GM23248 (cell line): ENCODE measurements at regions of chr11 and their contacts with region 1.

Region 1: GRCh38 chr11:27705873-27706820 is 5.9 kb upstream of the BDNF start:
- DNase-seq: peak; percentile 56
- H3K4me3 ChIP-seq: no peak overlapping the region
- H3K27ac ChIP-seq: no peak overlapping the region
- H3K4me1 ChIP-seq: 0 out of 2 replicates have a peak, but pooled peaks cover 12% of the 10 kb centered on the region
- H3K27me3 ChIP-seq: no peaks in the 10 kb centered on the region

Region 2: GRCh38 chr11:27656806-27657483 is 49.2 kb before region 1 on chr11:
- in situ Hi-C with region 1: no loop called
- DNase-seq: no peak
- H3K4me3 ChIP-seq: no peak overlapping the region
- H3K27ac ChIP-seq: no peak overlapping the region
- H3K4me1 ChIP-seq: peaks cover 15% of the 10 kb centered on the region; the same call in 1 of the 2 replicates
- H3K27me3 ChIP-seq: no peaks in the 10 kb centered on the region

Region 3: GRCh38 chr11:28107748-28108618 is 401.8 kb after region 1 on chr11 and contains the starts of genes KIF18A and METTL15:
- in situ Hi-C with region 1: loop called (anchors 25 kb)
- DNase-seq: peak; percentile 100
- H3K4me3 ChIP-seq: peak within 1 kb of the TSS; percentile 94
- H3K27ac ChIP-seq: peak within 1 kb of the TSS; percentile 97
- H3K4me1 ChIP-seq: peaks cover 62% of the 10 kb centered on the region
- H3K27me3 ChIP-seq: no peaks in the 10 kb centered on the region
- total RNA-seq, gene KIF18A: 7.8 and 12.5 TPM in 2 replicates
- total RNA-seq, gene METTL15: 11.0 and 15.9 TPM in 2 replicates

Region 4: DNA sequence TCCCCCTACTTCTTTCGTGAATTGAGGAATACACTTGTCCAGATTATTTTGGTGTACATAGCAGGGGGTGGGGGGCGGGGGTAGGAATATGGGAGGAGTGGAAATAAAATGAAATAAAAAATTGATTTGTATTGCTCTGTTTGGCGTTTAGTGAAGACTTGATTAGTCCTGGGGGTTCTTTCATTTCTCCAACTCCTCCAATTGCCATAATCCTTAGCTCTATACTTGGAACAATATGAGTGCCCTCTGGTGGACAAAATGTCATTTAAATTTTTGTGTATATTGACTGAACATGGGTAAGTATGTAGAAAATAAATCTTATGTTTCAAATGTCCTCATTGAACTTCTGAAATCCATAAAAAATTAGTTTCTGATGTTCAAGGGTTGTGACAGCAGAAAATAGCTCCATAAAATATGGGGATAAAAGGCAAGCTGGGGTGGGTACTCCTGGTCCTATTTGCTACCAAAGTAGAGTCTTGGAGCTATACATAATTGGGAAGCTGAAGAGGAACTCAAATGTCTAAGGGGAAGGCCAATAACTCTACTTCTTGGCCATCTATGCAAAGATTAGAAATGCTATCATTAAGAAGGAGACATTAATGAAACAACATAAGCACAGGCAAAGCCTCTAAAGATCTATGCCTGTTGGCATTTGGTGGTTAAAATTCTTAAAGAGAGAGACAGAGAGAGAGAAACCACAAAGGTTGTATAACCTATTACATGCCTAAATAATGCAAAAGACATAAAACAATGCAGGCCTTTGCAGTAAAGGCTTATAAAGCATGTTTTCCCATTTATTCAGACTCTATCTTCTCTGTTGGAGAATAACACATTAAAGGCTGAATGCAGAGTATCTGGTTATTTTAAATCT is 823.6 kb after region 1 on chr11:
- in situ Hi-C with region 1: loop called (anchors 10 kb)
- DNase-seq: peak; percentile 71
- H3K4me3 ChIP-seq: peak overlapping the region; percentile 28; the same call in 1 of the 2 replicates
- H3K27ac ChIP-seq: no peak overlapping the region
- H3K4me1 ChIP-seq: peaks cover 21% of the 10 kb centered on the region
- H3K27me3 ChIP-seq: no peaks in the 10 kb centered on the region

Region 5: DNA sequence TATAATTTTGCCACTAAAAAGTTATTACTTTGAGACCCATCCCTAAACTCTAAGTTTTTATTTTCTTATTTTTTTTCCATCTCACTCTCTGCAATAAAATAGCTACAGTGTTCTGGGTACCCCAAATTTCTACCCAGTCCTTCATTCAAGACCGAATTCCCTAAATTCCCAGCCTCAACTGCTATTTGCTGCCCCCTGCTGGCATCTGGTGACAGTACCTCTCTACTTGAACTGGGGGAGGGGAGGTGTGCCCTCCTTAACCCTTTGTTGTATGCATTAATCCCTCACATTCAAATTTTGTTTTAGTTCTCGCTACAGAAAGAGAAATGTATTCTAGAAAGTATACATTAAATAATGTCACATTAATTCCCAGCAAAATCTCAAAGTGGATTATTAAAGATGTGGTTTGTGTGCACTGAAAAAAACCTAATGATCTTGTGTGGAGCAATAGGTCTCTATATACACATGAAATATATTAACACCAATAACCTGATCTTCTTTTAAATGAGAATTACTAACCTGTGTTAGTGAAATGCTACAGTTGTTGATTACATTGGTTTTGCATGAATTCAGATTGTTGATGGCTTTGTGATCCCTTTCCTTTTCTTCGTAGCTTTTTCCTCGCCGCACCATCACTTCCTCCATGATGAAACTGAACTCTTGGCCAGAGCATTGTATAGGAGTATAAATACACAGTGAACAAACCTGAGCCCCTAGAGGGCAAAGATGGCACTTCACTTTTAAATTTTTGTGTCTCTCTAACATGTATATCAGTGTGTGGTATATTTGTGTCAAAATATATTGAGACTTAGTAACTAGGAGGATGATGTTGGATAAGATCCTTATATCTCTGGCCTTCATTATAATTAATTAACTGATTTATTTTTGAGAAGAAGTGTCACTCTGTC is 992.0 kb after region 1 on chr11:
- in situ Hi-C with region 1: loop called (anchors 10 kb)
- DNase-seq: peak; percentile 66
- H3K4me3 ChIP-seq: no peak overlapping the region
- H3K27ac ChIP-seq: no peak overlapping the region
- H3K4me1 ChIP-seq: peaks cover 26% of the 10 kb centered on the region
- H3K27me3 ChIP-seq: no peaks in the 10 kb centered on the region

Region 6: GRCh38 chr11:29159552-29160465 is 1453.7 kb after region 1 on chr11:
- in situ Hi-C with region 1: loop called (anchors 25 kb)
- DNase-seq: peak; percentile 86
- H3K4me3 ChIP-seq: no peak overlapping the region
- H3K27ac ChIP-seq: no peak overlapping the region
- H3K4me1 ChIP-seq: peaks cover 30% of the 10 kb centered on the region
- H3K27me3 ChIP-seq: no peaks in the 10 kb centered on the region